ENCODE measurements at regions of chr7 and their contacts with region 1.

Region 1: GRCh38 chr7:16695621-16696237 is 49.7 kb downstream of the BZW2 start:
- DNase-seq: peak; percentile 71
- H3K4me3 Mint-ChIP-seq: no peak overlapping the region
- H3K27ac Mint-ChIP-seq: no peak overlapping the region
- H3K4me1 Mint-ChIP-seq: peaks cover 7% of the 10 kb centered on the region
- H3K27me3 Mint-ChIP-seq: no peaks in the 10 kb centered on the region
- CTCF ChIP-seq: peak; percentile 83

Region 2: GRCh38 chr7:16619979-16620408 is 75.7 kb before region 1 on chr7:
- CTCF ChIA-PET with region 1: no interaction called
- intact Hi-C with region 1: no loop called
- DNase-seq: no peak
- H3K4me3 Mint-ChIP-seq: no peak overlapping the region
- H3K27ac Mint-ChIP-seq: no peak overlapping the region
- H3K4me1 Mint-ChIP-seq: peaks cover 19% of the 10 kb centered on the region
- H3K27me3 Mint-ChIP-seq: no peaks in the 10 kb centered on the region
- CTCF ChIP-seq: no peak

Region 3: GRCh38 chr7:16786257-16786656 is 90.5 kb after region 1 on chr7:
- CTCF ChIA-PET with region 1: interaction called, 6 read pairs
- intact Hi-C with region 1: loop called (anchors 5 kb)
- DNase-seq: no peak
- H3K4me3 Mint-ChIP-seq: no peak overlapping the region
- H3K27ac Mint-ChIP-seq: peak overlapping the region; percentile 29
- H3K4me1 Mint-ChIP-seq: peaks cover 34% of the 10 kb centered on the region
- H3K27me3 Mint-ChIP-seq: no peaks in the 10 kb centered on the region
- CTCF ChIP-seq: no peak

Region 4: GRCh38 chr7:16891338-16891737 is 195.6 kb after region 1 on chr7:
- CTCF ChIA-PET with region 1: interaction called, 3 read pairs
- intact Hi-C with region 1: loop called (anchors 1 kb)
- DNase-seq: peak; percentile 76
- H3K4me3 Mint-ChIP-seq: no peak overlapping the region
- H3K27ac Mint-ChIP-seq: no peak overlapping the region
- H3K4me1 Mint-ChIP-seq: peaks cover 48% of the 10 kb centered on the region
- H3K27me3 Mint-ChIP-seq: no peaks in the 10 kb centered on the region
- CTCF ChIP-seq: peak; percentile 68

Measured in Calu3 (cell line).